ENCODE measurements at regions of chr1 and their contacts with region 1.

Region 1: GRCh38 chr1:223700942-223701637 is 11.2 kb upstream of the CAPN2 start:
- DNase-seq: peak; percentile 94
- H3K4me3 ChIP-seq: peak overlapping the region; percentile 14 to 20 (median 16)
- H3K27ac ChIP-seq: peak overlapping the region; percentile 93
- H3K4me1 ChIP-seq: peaks cover 52% of the 10 kb centered on the region
- H3K27me3 ChIP-seq: no peaks in the 10 kb centered on the region
- CTCF ChIP-seq: no peak

Region 2: DNA sequence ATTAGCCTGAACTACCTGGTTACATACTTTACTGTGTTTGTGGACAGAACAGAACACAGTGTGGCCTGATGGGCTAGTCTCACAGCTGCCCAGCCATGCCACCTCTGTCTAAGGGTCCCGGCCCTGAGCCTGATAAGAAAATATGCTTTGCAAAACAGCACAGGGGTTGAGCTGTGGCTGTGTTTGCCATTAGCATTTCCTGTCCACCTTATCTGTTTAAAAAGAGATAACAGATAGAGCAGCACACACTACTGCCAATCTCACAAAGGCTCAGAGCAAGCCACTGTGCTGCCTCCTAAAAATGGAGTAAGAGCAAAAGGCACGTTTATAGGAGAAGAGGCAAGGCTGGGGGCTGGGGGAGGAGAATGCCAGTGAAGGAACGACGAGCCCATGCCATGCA is 432.1 kb before region 1 on chr1:
- CTCF ChIA-PET with region 1: no interaction called
- dilution Hi-C with region 1: no loop called
- in situ Hi-C with region 1: no loop called
- intact Hi-C with region 1: no loop called
- DNase-seq: no peak
- H3K4me3 ChIP-seq: no peak overlapping the region
- H3K27ac ChIP-seq: no peak overlapping the region
- H3K4me1 ChIP-seq: no peaks in the 10 kb centered on the region
- H3K27me3 ChIP-seq: no peaks in the 10 kb centered on the region
- CTCF ChIP-seq: no peak

Region 3: GRCh38 chr1:223748773-223749733 is 48.0 kb after region 1 on chr1:
- CTCF ChIA-PET with region 1: no interaction called
- dilution Hi-C with region 1: no loop called
- in situ Hi-C with region 1: no loop called
- intact Hi-C with region 1: loop called (anchors 1 kb)
- DNase-seq: no peak
- H3K4me3 ChIP-seq: no peak overlapping the region
- H3K27ac ChIP-seq: no peak overlapping the region
- H3K4me1 ChIP-seq: no peaks in the 10 kb centered on the region
- H3K27me3 ChIP-seq: no peaks in the 10 kb centered on the region
- CTCF ChIP-seq: peak; percentile 57 to 81

Region 4: DNA sequence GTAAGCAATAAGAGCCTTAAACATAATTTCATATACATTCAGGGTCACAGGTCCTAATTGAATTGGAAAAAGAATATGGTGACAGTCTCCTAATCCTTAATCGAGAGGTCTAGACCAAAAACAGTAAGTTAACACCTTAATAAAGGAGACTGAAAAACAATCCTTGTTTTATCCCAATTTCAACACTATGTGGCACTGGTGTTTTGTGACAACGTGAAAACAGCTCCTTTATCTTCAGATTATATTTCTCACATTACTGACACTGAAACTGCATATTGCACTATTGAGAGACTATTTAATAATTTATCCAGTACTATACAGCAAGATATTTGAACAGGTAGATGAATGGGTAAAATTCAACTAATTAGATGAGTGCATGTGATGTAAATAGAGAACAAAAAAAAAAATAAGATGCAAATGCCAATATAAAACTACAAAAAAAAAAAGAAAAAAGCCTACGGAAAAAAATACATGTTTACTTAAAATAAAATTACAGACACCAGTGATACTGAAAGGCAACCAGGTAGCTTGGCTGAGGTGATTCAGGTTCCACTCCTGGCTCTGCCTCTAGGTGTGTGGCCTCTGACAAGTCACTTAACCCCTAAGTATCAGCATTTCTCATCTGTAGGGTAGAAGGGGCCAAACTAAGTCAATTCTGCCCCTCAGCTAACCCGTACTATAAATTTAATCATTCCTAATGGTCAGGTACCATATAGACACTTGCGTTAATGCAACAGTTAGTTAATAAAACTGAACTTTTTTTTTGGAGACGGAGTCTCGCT is 110.7 kb after region 1 on chr1:
- CTCF ChIA-PET with region 1: no interaction called
- dilution Hi-C with region 1: no loop called
- in situ Hi-C with region 1: no loop called
- intact Hi-C with region 1: loop called (anchors 1 kb)
- DNase-seq: peak; percentile 27
- H3K4me3 ChIP-seq: no peak overlapping the region
- H3K27ac ChIP-seq: no peak overlapping the region
- H3K4me1 ChIP-seq: peaks cover 25% of the 10 kb centered on the region
- H3K27me3 ChIP-seq: no peaks in the 10 kb centered on the region
- CTCF ChIP-seq: peak; percentile 41 to 55

Region 5: GRCh38 chr1:224106568-224107281 is 405.6 kb after region 1 on chr1:
- CTCF ChIA-PET with region 1: no interaction called
- dilution Hi-C with region 1: no loop called
- in situ Hi-C with region 1: no loop called
- intact Hi-C with region 1: loop called (anchors 1 kb)
- DNase-seq: peak; percentile 52
- H3K4me3 ChIP-seq: no peak overlapping the region
- H3K27ac ChIP-seq: no peak overlapping the region
- H3K4me1 ChIP-seq: peaks cover 4% of the 10 kb centered on the region
- H3K27me3 ChIP-seq: no peaks in the 10 kb centered on the region
- CTCF ChIP-seq: peak; percentile 55 to 74

Region 6: GRCh38 chr1:224329842-224330753 is 629.0 kb after region 1 on chr1 and contains the start of gene NVL:
- CTCF ChIA-PET with region 1: no interaction called
- dilution Hi-C with region 1: no loop called
- in situ Hi-C with region 1: no loop called
- intact Hi-C with region 1: loop called (anchors 1 kb)
- DNase-seq: peak; percentile 89
- H3K4me3 ChIP-seq: peak within 1 kb of the TSS; percentile 64 to 98 (median 87)
- H3K27ac ChIP-seq: peak within 1 kb of the TSS; percentile 95
- H3K4me1 ChIP-seq: peaks cover 14% of the 10 kb centered on the region
- H3K27me3 ChIP-seq: no peaks in the 10 kb centered on the region
- CTCF ChIP-seq: no peak
- total RNA-seq, gene NVL: 24.3 to 28.8 TPM

Measured in mammary epithelial cell (primary cell).